Activated CD4-positive, alpha-beta T cell treated with anti-CD3 and anti-CD28 coated beads, Interleukin-2, amount 10 ng/mL, durations not matched to agents 7 days and 5 days (primary cell): ENCODE measurements at regions of chr22 and their contacts with region 1.

Region 1: GRCh38 chr22:37166675-37167066 is 17.0 kb upstream of the IL2RB start:
- DNase-seq: peak; percentile 84
- H3K4me3 Mint-ChIP-seq: peak overlapping the region; percentile 31
- H3K27ac Mint-ChIP-seq: peak overlapping the region; percentile 84
- H3K4me1 Mint-ChIP-seq: peaks cover 91% of the 10 kb centered on the region
- H3K27me3 Mint-ChIP-seq: no peaks in the 10 kb centered on the region

Region 2: DNA sequence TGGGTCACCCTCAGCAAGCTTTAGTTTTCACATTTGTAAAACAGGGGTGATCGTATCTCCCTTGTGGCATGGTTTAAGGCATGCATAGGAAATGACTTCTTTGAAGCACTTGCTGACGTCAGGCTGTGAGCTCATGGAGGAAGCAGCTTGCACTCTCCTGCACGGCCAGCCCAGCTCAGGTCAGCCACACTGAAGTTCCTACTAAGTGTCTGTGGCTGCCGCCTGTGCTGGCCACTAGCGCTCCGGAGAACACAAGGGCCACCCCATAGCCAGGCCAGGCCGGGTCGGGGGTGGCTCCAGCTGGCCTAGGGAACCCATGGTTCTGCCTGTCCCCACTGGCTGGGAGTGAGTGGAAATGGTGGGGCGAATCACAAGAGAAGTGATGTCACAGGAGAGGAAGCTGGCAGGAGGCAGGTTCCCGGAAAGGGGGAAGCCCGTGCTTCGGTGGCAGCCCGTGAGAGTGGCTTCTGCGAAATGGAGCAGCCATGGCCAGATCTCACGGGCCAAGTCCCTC is 86.9 kb before region 1 on chr22:
- CTCF ChIA-PET with region 1: interaction called, 10 read pairs
- POLR2A ChIA-PET with region 1: no interaction called
- DNase-seq: peak; percentile 92
- H3K4me3 Mint-ChIP-seq: peak overlapping the region; percentile 60
- H3K27ac Mint-ChIP-seq: peak overlapping the region; percentile 97
- H3K4me1 Mint-ChIP-seq: peaks cover 84% of the 10 kb centered on the region
- H3K27me3 Mint-ChIP-seq: no peaks in the 10 kb centered on the region

Region 3: DNA sequence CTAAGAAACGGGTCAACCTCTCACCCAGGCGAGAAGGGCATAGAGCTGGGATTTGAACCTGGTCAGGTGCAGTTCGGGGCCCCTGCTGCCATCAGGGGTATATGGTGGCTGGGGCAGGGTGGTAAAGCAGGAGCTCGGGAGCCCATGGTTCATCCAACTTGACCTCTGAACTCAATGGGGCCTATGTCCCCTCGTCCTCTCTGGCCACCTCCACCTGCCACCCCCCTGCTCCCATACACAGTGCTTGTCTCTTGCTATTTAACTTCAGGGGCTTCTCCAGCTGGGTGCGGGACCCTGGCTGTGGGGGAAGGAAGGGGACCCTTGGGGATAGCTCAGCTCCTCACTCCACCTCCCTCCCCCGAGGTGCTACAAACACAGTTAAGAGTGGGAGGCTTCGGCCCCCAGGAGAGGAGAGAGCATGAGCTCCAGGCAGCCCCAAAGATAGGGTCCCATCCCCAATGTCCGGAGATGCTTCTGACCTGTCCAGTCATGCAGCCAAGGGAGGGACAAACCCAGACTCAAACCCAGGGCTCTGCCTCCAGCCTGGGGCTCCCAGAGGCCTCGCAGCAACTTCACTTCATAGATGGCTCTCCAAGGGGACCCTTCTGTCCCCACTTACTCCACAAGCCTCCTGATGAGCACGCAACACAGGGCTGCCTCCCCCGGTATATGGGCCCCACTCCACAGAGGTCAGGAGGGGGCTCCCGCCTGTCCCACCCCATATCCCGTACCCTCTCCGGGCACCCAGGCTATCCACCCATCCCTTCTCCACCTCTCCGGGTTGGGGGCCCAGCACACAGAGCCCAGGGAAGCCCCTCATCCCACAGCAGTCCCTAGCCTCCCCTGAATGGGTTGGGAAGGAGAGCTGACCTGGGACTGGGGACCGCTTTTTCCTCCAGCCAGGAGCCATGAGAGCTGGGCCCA is 17.7 kb before region 1 on chr22:
- CTCF ChIA-PET with region 1: interaction called, 63 read pairs
- POLR2A ChIA-PET with region 1: interaction called, 30 read pairs
- DNase-seq: no peak
- H3K4me3 Mint-ChIP-seq: peak overlapping the region; percentile 87
- H3K27ac Mint-ChIP-seq: peak overlapping the region; percentile 91
- H3K4me1 Mint-ChIP-seq: peaks cover 60% of the 10 kb centered on the region
- H3K27me3 Mint-ChIP-seq: no peaks in the 10 kb centered on the region